Activated T-helper 1 cell treated with anti-CD3 and anti-CD28 coated beads, Interleukin-12 subunit alpha, Interleukin-12 subunit beta, Interleukin-2, Interleukin-4 antibody, amounts not matched to agents 30 ng/mL and 10 ng/mL and 1 ng/mL, durations not matched to agents 14 hours and 24 hours and 36 hours (primary cell): ENCODE measurements at regions of chr2 and their contacts with region 1.

Region 1: GRCh38 chr2:230068016-230068650 is 591 bp downstream of the SLC16A14 start:
- DNase-seq: peak; percentile 22
- H3K4me3 Mint-ChIP-seq: peak overlapping the region; percentile 88
- H3K27ac Mint-ChIP-seq: no peak overlapping the region
- H3K4me1 Mint-ChIP-seq: peaks cover 22% of the 10 kb centered on the region
- H3K27me3 Mint-ChIP-seq: peaks cover 21% of the 10 kb centered on the region

Region 2: GRCh38 chr2:229800997-229801754 is 267.0 kb before region 1 on chr2:
- intact Hi-C with region 1: loop called (anchors 5 kb)
- DNase-seq: peak; percentile 50
- H3K4me3 Mint-ChIP-seq: no peak overlapping the region
- H3K27ac Mint-ChIP-seq: no peak overlapping the region
- H3K4me1 Mint-ChIP-seq: no peaks in the 10 kb centered on the region
- H3K27me3 Mint-ChIP-seq: no peaks in the 10 kb centered on the region

Region 3: DNA sequence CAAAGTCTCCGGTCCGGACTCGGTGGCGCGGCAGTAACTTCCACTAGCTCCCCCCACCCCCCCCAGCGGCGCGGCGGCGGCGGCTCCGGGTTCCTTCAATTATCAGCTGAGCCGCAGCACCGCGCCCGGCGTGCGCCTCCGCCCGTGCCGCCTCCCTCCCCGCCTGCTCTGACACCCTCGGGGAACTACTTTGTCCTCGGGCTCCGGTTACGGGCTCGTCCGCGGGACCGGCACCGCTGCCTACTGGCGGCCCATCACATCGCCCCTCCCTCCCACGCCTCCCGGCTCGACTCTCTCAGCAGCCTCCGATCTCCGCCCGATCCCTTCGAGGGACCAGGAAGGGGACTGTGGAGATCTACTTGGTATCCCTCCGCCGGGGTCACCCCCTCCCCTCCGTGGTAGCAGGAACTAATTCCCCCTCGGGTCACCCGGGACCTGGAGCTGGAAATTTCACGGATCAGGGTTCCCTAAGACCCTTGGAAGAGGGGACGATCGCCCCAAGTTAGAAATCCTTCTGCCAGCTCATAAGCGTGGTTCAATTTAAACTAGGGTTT is 146.2 kb before region 1 on chr2 and contains the start of gene TRIP12:
- intact Hi-C with region 1: loop called (anchors 5 kb)
- DNase-seq: peak; percentile 83
- H3K4me3 Mint-ChIP-seq: peak within 1 kb of the TSS; percentile 97
- H3K27ac Mint-ChIP-seq: peak within 1 kb of the TSS; percentile 96
- H3K4me1 Mint-ChIP-seq: peaks cover 40% of the 10 kb centered on the region
- H3K27me3 Mint-ChIP-seq: no peaks in the 10 kb centered on the region
- total RNA-seq, gene TRIP12: 244 and 253 TPM in 2 replicates

Region 4: DNA sequence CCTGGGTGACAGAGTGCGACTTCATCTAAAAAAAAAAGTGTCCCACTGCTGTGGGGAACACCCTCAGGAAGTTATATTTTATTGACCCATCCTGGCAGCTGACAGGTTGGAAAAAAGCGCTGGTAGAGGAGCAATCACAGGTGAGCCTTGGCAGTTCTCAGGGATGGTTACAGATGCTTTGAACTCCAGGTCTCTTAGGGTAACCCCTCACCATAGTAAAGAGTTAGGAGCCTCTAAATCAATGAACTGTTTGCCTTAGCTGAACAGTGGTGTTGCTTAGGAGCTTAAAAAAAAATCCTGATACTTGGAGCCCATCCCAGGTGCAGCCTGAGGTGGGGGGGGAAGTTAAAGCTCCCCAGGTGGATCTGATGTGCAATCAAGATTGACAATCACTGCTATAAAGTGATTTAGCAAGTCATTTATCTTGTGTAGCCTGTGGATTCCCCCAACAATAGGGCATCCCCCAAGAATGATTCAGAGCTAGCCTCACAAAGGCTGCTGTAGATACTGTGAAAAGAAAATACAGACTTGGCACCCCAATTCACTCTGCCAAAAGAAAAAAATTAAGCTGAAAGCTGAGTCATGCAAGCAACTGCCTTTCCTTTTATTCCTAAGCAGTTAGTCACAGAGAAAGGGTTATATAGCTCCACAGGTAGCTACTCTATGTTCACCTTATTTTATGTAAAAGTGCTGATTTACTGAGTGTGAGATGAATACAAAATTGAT is 14.2 kb before region 1 on chr2:
- intact Hi-C with region 1: loop called (anchors 2 kb)
- DNase-seq: no peak
- H3K4me3 Mint-ChIP-seq: no peak overlapping the region
- H3K27ac Mint-ChIP-seq: no peak overlapping the region
- H3K4me1 Mint-ChIP-seq: peaks cover 12% of the 10 kb centered on the region
- H3K27me3 Mint-ChIP-seq: no peaks in the 10 kb centered on the region

Region 5: GRCh38 chr2:230225486-230225885 is 157.4 kb after region 1 on chr2 and contains the start of gene SP140:
- intact Hi-C with region 1: loop called (anchors 5 kb)
- DNase-seq: peak; percentile 80
- H3K4me3 Mint-ChIP-seq: peak within 1 kb of the TSS; percentile 91
- H3K27ac Mint-ChIP-seq: peak within 1 kb of the TSS; percentile 98
- H3K4me1 Mint-ChIP-seq: peaks cover 63% of the 10 kb centered on the region
- H3K27me3 Mint-ChIP-seq: no peaks in the 10 kb centered on the region
- total RNA-seq, gene SP140: 235 and 243 TPM in 2 replicates